ENCODE measurements at regions of chr11 and their contacts with region 1.

Region 1: DNA sequence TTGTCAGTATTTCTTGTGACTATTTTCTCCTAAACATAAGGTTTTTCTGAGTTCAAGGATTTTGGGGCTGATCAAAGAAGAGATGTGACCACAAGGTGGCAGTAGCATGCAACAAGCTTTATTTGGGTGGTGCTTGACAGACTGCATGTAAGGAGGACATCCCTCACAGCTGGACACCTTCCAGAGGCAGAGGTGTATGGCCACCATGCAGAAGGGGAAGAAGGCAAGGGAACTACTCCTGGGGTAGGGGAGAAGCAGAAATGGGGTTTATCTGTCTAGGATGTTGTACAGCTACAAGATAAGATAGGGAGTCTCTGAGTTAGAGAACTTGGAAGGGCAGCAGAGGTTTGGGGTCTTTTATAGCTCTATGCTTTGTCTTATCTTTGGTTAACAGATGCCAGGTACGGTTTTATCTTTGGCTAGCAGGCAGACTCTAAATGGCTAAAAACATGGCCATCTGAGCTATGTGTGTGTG is 5.1 kb upstream of the BIRC2 start:
- DNase-seq: peak; percentile 86
- H3K4me3 ChIP-seq: no peak overlapping the region
- H3K27ac ChIP-seq: no peak overlapping the region
- H3K4me1 ChIP-seq: peaks cover 11% of the 10 kb centered on the region
- CTCF ChIP-seq: peak; percentile 97

Region 2: GRCh38 chr11:102666331-102666957 is 324.6 kb after region 1 on chr11:
- CTCF ChIA-PET with region 1: interaction called, 6 read pairs
- POLR2A ChIA-PET with region 1: no interaction called
- intact Hi-C with region 1: loop called (anchors 1 kb)
- DNase-seq: peak; percentile 56
- H3K4me3 ChIP-seq: no peak overlapping the region
- H3K27ac ChIP-seq: no peak overlapping the region
- H3K4me1 ChIP-seq: no peaks in the 10 kb centered on the region
- CTCF ChIP-seq: peak; percentile 98

Measured in OCI-LY7 (cell line).